HepG2 (cell line): ENCODE measurements at regions of chr13 and their contacts with region 1.

Region 1: DNA sequence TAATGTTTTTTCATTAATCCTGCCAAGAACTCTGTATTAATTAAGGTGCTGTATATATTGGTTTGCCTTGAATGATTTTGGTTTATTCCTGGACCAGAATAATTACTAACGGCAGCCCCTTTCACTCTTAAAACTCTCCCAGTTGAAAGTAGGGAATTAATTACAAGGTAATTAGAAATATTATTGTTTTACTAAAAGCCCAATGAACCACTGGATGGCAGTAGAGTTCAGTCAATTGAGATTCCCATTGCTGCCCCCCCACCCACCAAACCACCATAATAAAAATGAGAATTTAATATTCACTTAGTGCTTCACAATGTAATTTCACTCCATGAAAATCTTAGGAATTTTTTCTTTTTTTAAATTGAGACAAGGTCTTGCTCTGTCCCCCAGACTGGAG is 13.7 kb downstream of the WBP4 start:
- DNase-seq: no peak
- ATAC-seq: no peak
- H3K4me3 ChIP-seq: no peak overlapping the region
- H3K27ac ChIP-seq: no peak overlapping the region
- H3K4me1 ChIP-seq: no peaks in the 10 kb centered on the region
- H3K27me3 ChIP-seq: no peaks in the 10 kb centered on the region
- CTCF ChIP-seq: peak; percentile 53
- EP300 ChIP-seq: no peak
- POLR2A ChIP-seq: no peak
- RAD21 ChIP-seq: 0 out of 2 replicates have a peak, but pooled peaks have one; percentile 36

Region 2: DNA sequence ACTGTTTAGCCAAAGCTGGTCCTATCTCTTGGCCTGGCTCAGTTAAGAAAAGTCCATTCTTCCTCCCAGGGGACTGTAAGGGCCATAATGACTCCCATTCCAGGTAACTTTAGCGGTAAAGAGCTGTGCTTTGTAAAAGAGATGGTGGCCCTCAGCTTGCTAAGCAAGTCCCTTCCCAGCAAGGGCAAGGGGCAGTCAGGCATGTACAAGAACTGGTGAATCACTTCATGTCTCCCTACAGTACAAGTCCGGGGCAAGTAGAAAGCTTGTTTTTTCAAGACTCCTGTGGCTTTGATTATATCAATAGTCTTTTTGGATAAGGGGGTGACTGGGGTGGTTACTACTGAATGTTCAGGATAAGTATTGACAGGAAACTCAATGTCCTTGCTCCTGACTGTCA is 196.7 kb before region 1 on chr13:
- CTCF ChIA-PET with region 1: no interaction called
- POLR2A ChIA-PET with region 1: no interaction called
- in situ Hi-C with region 1: no loop called
- intact Hi-C with region 1: no loop called
- DNase-seq: no peak
- ATAC-seq: no peak
- H3K4me3 ChIP-seq: no peak overlapping the region
- H3K27ac ChIP-seq: no peak overlapping the region
- H3K4me1 ChIP-seq: peaks cover 25% of the 10 kb centered on the region
- H3K27me3 ChIP-seq: no peaks in the 10 kb centered on the region
- CTCF ChIP-seq: no peak
- EP300 ChIP-seq: no peak
- POLR2A ChIP-seq: no peak
- RAD21 ChIP-seq: no peak

Region 3: DNA sequence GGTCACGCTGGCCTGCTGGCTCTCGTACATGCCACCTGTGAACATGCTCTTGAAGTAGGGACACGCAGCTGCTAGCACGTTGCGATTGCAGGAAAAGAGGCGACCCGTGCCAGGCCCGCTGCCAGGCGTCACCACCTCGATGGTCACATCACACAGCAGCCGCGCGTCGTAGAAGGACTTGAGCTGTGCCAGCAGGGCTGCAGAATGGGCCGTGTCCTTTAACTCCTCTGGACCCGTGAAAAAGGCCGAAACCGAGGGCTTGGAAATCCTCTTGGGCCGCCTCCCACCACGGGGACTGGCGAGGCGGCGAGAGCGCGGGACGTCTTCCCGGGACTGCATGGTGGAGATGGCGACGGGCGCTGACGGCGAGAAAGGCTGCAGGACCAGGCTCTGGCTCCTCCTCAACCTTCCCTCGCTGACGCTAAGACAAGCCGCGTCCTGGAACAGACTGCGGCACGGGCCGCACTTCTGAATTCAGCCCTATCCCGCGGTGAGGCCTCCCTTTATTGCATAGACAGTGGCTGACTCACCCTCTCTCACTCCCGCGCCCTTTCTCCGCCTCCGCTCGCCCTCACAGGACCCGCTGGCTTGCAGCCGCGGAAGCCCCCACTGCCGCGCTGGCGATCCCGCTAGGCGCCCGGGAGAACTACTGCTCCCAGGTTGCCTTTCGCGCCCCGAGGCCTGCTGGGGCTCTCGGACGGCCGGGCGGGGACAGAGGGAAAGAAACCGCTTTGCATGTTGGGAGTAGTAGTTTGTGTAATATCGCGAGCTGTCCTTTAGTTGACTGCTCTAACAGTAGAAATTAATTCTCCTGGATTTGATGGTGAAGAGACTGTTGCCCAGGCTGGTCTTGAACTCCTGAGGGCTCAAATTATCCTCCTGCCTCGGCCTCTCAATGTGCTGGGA is 119.1 kb after region 1 on chr13 and contains the start of gene KBTBD7:
- CTCF ChIA-PET with region 1: interaction called, 3 read pairs
- POLR2A ChIA-PET with region 1: no interaction called
- in situ Hi-C with region 1: no loop called
- intact Hi-C with region 1: loop called (anchors 10 kb)
- DNase-seq: peak; percentile 91
- ATAC-seq: peak; percentile 98
- H3K4me3 ChIP-seq: peak within 1 kb of the TSS; percentile 57 to 89 (median 75)
- H3K27ac ChIP-seq: peak within 1 kb of the TSS; percentile 85
- H3K4me1 ChIP-seq: peaks cover 57% of the 10 kb centered on the region
- H3K27me3 ChIP-seq: no peaks in the 10 kb centered on the region; a peak in 1 of 5 replicates
- CTCF ChIP-seq: no peak; the same call in none of the 2 replicates
- EP300 ChIP-seq: 0 out of 4 replicates have a peak, but pooled peaks of 1 of the 2 experiments have one; percentile 44
- POLR2A ChIP-seq: peak; percentile 79 to 92
- RAD21 ChIP-seq: peak; percentile 27; the same call in 1 of the 2 replicates
- total RNA-seq, gene KBTBD7: 9.0 and 14.9 TPM in 2 replicates

Region 4: GRCh38 chr13:41222259-41222852 is 147.3 kb after region 1 on chr13:
- CTCF ChIA-PET with region 1: interaction called, 22 read pairs
- POLR2A ChIA-PET with region 1: no interaction called
- in situ Hi-C with region 1: loop called (anchors 5 kb)
- intact Hi-C with region 1: loop called (anchors 1 kb)
- DNase-seq: peak; percentile 50
- ATAC-seq: peak; percentile 91
- H3K4me3 ChIP-seq: no peak overlapping the region
- H3K27ac ChIP-seq: no peak overlapping the region
- H3K4me1 ChIP-seq: peaks cover 11% of the 10 kb centered on the region; the same call in 1 of the 2 replicates
- H3K27me3 ChIP-seq: no peaks in the 10 kb centered on the region
- CTCF ChIP-seq: peak; percentile 76
- EP300 ChIP-seq: no peak
- POLR2A ChIP-seq: no peak
- RAD21 ChIP-seq: peak; percentile 40; the same call in 1 of the 2 replicates